H1 (cell line): ENCODE measurements at regions of chr1 and their contacts with region 1.

Region 1: DNA sequence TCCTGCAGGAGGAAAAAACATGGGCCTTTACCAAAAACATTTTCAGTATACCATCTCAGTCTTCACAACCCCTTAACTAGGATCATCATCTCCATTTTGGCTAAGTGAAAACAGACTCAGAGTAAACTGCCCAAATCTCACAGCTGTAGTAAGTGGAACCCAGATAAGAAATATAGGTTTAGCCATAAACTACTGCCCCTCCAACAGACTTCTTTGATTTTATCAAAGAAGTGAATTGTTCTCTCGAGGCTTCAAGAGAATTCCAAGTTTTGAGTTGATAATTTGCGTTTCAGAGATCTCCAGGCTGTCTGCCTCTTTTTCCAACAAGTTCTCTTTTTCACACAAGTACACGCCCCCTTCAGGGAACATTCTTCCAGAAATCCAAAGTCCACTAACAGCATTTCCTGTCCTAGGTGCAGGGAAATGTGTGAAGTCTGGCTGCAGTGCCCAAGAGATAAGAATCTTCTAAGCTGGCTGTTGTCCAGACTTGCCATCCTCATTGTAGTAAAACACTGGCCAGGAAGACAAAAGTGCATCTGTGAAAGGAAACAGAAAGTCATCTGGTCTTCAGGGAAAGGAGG is 30.8 kb downstream of the RNF19B start:
- DNase-seq: no peak
- H3K4me3 ChIP-seq: no peak overlapping the region
- H3K27ac ChIP-seq: no peak overlapping the region
- H3K4me1 ChIP-seq: no peaks in the 10 kb centered on the region; a peak in 1 of 7 replicates
- H3K27me3 ChIP-seq: no peaks in the 10 kb centered on the region; a peak in 1 of 7 replicates
- CTCF ChIP-seq: no peak
- EP300 ChIP-seq: no peak
- POLR2A ChIP-seq: no peak
- RAD21 ChIP-seq: no peak

Region 2: GRCh38 chr1:32892368-32893197 is 41.2 kb before region 1 on chr1:
- CTCF ChIA-PET with region 1: interaction called, 22 read pairs
- POLR2A ChIA-PET with region 1: no interaction called
- DNase-seq: peak; percentile 47 to 93
- H3K4me3 ChIP-seq: peak overlapping the region; percentile 48 to 87 (median 66)
- H3K27ac ChIP-seq: no peak overlapping the region
- H3K4me1 ChIP-seq: peaks cover 0 to 15% (median 7%) of the 10 kb centered on the region in 4 experiments; a peak in 5 of 7 replicates
- H3K27me3 ChIP-seq: peaks cover 2 to 33% (median 17%) of the 10 kb centered on the region in 4 experiments
- CTCF ChIP-seq: peak in 2 of 3 experiments; percentile 95 to 99; a peak in 3 of 4 replicates
- EP300 ChIP-seq: no peak
- POLR2A ChIP-seq: no peak; a peak in 1 of 3 replicates
- RAD21 ChIP-seq: peak; percentile 34 to 57; a peak in 3 of 4 replicates

Region 3: DNA sequence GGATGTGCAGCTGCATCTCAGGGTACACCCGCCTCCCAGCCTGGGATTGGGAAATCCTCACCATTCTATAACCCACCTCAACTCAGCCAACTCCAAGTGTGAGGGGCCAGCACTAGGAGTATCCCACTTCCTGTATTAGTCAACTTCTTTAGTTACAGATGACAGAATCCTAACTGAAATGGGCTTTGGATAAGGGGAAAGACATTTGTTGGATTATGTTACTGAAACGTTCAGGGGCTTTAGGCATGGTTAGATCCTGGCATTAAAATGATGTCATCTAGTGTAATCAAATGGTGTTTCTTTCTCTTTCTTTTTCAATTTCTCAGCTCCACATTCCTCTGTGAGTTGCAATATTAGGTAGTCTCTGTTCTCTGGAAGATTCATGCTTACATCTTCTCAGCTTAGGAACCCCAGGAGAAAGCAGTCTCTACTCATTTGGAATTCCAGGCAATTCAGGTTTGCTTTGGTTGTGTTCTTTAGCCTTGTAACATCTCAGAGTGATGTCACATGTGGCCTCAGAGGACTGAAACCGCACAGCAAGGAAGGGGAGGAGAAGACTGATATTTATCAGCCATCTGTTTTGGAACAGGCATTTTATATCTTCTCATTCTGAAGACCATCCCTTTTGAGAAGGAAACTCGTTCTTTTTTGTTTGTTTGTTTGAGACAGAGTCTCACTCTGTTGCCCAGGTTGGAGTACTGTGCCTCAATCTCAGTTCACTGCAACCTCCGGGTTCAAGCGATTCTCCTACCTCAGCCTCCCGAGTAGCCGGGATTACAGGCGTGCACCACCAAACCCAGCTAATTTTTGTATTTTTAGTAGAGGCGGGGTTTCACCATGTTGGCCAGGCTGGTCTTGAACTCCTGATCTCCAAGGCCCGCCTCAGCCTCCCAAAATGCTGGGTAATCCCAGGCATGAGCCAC is 13.8 kb before region 1 on chr1:
- CTCF ChIA-PET with region 1: interaction called, 24 read pairs
- POLR2A ChIA-PET with region 1: interaction called, 3 read pairs
- DNase-seq: no peak
- H3K4me3 ChIP-seq: no peak overlapping the region
- H3K27ac ChIP-seq: no peak overlapping the region
- H3K4me1 ChIP-seq: peaks cover 0 to 4% (median 1%) of the 10 kb centered on the region in 4 experiments; a peak in 2 of 7 replicates
- H3K27me3 ChIP-seq: peaks cover 6 to 25% (median 23%) of the 10 kb centered on the region in 4 experiments
- CTCF ChIP-seq: no peak
- EP300 ChIP-seq: no peak
- POLR2A ChIP-seq: no peak
- RAD21 ChIP-seq: no peak

Region 4: GRCh38 chr1:32964461-32965250 is 30.8 kb after region 1 on chr1 and contains the start of gene RNF19B:
- CTCF ChIA-PET with region 1: interaction called, 34 read pairs
- POLR2A ChIA-PET with region 1: interaction called, 7 read pairs
- DNase-seq: peak; percentile 80 to 96
- H3K4me3 ChIP-seq: peak within 1 kb of the TSS; percentile 70 to 83 (median 70)
- H3K27ac ChIP-seq: peak within 1 kb of the TSS; percentile 58; the same call in 1 of the 2 replicates
- H3K4me1 ChIP-seq: peaks cover 0 to 5% (median 1%) of the 10 kb centered on the region in 4 experiments; a peak in 3 of 7 replicates
- H3K27me3 ChIP-seq: peaks cover 0 to 6% (median 0%) of the 10 kb centered on the region in 4 experiments; a peak in 2 of 7 replicates
- CTCF ChIP-seq: no peak; a peak in 1 of 4 replicates
- EP300 ChIP-seq: no peak
- POLR2A ChIP-seq: peak; percentile 94 to 96
- RAD21 ChIP-seq: no peak
- total RNA-seq, gene RNF19B: 10.4 and 11.2 TPM in 2 replicates

Region 5: GRCh38 chr1:33007190-33008050 is 73.6 kb after region 1 on chr1:
- CTCF ChIA-PET with region 1: interaction called, 64 read pairs
- POLR2A ChIA-PET with region 1: interaction called, 3 read pairs
- DNase-seq: no peak
- H3K4me3 ChIP-seq: no peak overlapping the region
- H3K27ac ChIP-seq: no peak overlapping the region
- H3K4me1 ChIP-seq: peaks cover 0 to 4% (median 2%) of the 10 kb centered on the region in 4 experiments; a peak in 4 of 7 replicates
- H3K27me3 ChIP-seq: no peaks in the 10 kb centered on the region
- CTCF ChIP-seq: peak in 2 of 3 experiments; percentile 19 to 38; a peak in 3 of 4 replicates
- EP300 ChIP-seq: no peak
- POLR2A ChIP-seq: no peak
- RAD21 ChIP-seq: peak; percentile 17 to 44; a peak in 3 of 4 replicates

Region 6: DNA sequence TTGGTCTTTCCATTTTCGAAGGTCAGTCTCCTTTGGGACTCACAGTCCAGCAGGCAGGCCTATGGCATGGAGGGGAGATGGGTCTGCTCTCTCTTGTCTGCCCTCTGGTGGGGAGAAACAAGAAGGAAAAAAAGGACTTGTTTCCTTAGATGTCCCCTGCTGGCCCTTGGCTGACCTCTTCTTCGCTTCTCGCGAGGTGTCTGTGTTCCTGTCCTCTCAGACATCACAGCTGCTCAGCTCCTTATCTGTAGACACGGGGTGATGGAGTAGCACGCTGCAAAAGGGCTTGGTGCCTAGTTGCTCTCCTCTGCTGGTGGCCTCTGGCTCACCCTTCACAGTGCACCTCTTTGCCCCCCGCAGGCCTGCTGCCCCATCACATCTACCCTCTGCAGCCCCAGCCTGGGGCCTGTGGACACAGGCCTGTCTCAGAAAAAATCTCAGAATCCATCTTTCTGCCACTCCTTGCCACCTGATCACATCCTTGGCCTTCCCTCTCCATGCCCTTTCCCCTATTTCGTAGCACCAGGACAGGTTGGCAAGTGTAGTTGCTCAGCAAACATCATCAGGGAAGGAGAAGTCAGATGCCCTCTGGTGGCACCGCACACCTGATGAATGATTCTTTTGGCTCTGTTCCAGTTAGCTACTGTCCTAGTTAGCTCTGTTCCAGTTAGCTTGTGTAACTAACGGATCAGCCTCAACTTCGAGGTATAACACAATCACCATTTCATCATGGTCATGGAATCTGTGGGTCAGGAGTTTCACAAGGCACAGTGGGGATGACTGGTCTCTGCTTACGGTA is 121.6 kb after region 1 on chr1:
- CTCF ChIA-PET with region 1: interaction called, 73 read pairs
- POLR2A ChIA-PET with region 1: no interaction called
- DNase-seq: peak; percentile 46 to 60
- H3K4me3 ChIP-seq: no peak overlapping the region
- H3K27ac ChIP-seq: no peak overlapping the region
- H3K4me1 ChIP-seq: no peaks in the 10 kb centered on the region
- H3K27me3 ChIP-seq: no peaks in the 10 kb centered on the region; a peak in 1 of 7 replicates
- CTCF ChIP-seq: peak; percentile 49 to 89 (median 83)
- EP300 ChIP-seq: no peak
- POLR2A ChIP-seq: no peak
- RAD21 ChIP-seq: peak; percentile 66 to 73